ENCODE measurements at regions of chr5 and their contacts with region 1.

Region 1: GRCh38 chr5:18699681-18700080 is 1065.4 kb downstream of the TAF11L14 start:
- DNase-seq: no peak
- ATAC-seq: no peak
- H3K4me3 ChIP-seq: no peak overlapping the region
- H3K27ac ChIP-seq: no peak overlapping the region
- H3K4me1 ChIP-seq: peaks cover 0 to 12% of the 10 kb centered on the region in 2 donors
- H3K27me3 ChIP-seq: no peaks in the 10 kb centered on the region
- CTCF ChIP-seq: no peak

Region 2: DNA sequence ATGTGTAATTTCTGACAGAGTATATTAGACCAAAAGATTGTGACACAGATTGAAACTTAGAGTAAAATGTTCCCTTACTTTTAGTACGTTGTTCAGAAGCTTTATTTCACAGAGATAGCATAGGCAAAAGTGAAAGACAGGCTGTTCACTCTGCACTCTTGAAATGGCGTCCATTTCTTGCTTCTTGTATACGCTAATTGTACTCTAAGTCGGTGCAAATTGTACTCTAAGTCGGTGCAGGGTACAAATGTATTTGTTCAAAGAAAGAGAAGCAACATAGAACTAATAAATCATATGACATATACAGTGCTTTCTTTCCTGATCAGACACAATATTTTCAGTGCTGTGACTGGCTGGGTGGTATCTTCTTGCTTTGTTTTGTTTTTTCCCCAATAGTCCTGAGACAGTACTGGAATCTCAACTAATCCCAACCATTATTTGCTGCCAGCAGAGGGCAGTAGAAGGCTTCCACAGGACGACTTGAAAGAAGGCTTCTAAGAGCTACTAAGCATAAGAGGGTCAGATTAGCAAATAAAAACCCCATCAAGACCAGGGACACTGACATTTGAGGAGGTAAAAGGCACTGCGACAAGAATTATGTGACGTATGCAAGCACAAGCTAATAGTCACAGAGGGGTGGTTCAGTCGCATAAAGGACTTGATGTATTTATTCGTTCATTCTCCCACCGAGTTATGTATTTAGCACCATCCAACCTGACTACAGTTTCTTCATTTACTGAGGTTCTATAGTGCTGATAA is 233.7 kb before region 1 on chr5:
- intact Hi-C with region 1: loop called in 1 of 2 experiments (anchors 10 kb)
- DNase-seq: peak in 3 of 4 donors; percentile 30 to 75 (median 57)
- ATAC-seq: peak; percentile 95
- H3K4me3 ChIP-seq: no peak overlapping the region
- H3K27ac ChIP-seq: no peak overlapping the region
- H3K4me1 ChIP-seq: no peaks in the 10 kb centered on the region
- H3K27me3 ChIP-seq: no peaks in the 10 kb centered on the region
- CTCF ChIP-seq: peak; percentile 31 to 55

Region 3: GRCh38 chr5:19044931-19045724 is 345.4 kb after region 1 on chr5:
- intact Hi-C with region 1: no loop called
- DNase-seq: no peak
- ATAC-seq: no peak
- H3K4me3 ChIP-seq: no peak overlapping the region
- H3K27ac ChIP-seq: no peak overlapping the region
- H3K4me1 ChIP-seq: no peaks in the 10 kb centered on the region
- H3K27me3 ChIP-seq: no peaks in the 10 kb centered on the region
- CTCF ChIP-seq: no peak

Measured in left lung (tissue), 14 donors.